Activated CD8-positive, alpha-beta memory T cell treated with anti-CD3 and anti-CD28 coated beads, Interleukin-2, amount 10 ng/mL, durations not matched to agents 7 days and 5 days (primary cell): ENCODE measurements at regions of chr1 and their contacts with region 1.

Region 1: DNA sequence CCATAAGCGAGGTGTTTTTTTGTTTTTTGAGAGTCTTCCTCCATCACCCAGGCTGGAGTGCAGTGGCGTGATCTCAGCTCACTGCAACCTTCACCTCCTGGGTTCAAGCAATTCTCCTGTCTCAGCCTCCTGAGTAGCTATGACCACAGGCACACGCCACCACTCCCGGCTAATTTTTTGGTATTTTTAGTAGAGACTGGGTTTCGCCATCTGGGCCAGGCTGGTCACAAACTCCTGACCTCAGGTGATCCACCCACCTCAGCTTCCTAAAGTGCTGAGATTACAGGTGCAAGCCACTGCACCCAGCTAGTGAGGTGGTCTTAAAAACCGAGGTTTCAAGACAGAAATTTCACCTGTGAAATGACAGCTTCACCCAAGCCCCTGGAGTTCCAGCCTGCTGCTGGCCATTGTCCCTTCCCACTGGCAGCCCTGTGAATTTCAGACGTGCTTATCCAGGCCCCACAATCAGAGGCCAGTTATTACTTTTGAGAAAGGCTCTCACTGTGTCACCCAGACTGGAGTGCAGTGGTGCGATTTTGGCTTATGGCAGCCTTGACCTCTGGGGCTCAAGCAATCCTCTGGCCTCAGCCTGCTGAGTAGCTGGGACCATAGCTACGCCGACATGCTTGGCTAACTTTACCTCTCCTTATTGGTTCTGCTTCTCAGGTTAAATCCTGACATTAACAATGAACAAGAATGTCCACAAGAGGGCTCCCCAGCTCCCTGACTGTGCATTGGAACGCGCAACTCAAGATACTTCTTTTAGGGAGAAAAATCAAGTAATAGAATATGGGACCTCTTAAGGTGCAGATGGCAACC is 19.4 kb downstream of the ENO1 start:
- DNase-seq: peak; percentile 68
- ATAC-seq: peak; percentile 48
- H3K4me3 Mint-ChIP-seq: peak overlapping the region; percentile 32
- H3K27ac Mint-ChIP-seq: peak overlapping the region; percentile 90
- H3K4me1 Mint-ChIP-seq: peaks cover 60% of the 10 kb centered on the region
- H3K27me3 Mint-ChIP-seq: no peaks in the 10 kb centered on the region

Region 2: GRCh38 chr1:8525558-8526275 is 333.4 kb before region 1 on chr1:
- CTCF ChIA-PET with region 1: no interaction called
- DNase-seq: peak; percentile 57
- ATAC-seq: peak; percentile 81
- H3K4me3 Mint-ChIP-seq: no peak overlapping the region
- H3K27ac Mint-ChIP-seq: no peak overlapping the region
- H3K4me1 Mint-ChIP-seq: peaks cover 24% of the 10 kb centered on the region
- H3K27me3 Mint-ChIP-seq: no peaks in the 10 kb centered on the region

Region 3: GRCh38 chr1:8873506-8874229 is 14.6 kb after region 1 on chr1:
- CTCF ChIA-PET with region 1: interaction called, 54 read pairs
- DNase-seq: peak; percentile 86
- ATAC-seq: peak; percentile 46
- H3K4me3 Mint-ChIP-seq: peak overlapping the region; percentile 97
- H3K27ac Mint-ChIP-seq: peak overlapping the region; percentile 80
- H3K4me1 Mint-ChIP-seq: peaks cover 71% of the 10 kb centered on the region
- H3K27me3 Mint-ChIP-seq: no peaks in the 10 kb centered on the region

Region 4: GRCh38 chr1:8941906-8942305 is 82.8 kb after region 1 on chr1:
- CTCF ChIA-PET with region 1: no interaction called
- DNase-seq: no peak
- ATAC-seq: no peak
- H3K4me3 Mint-ChIP-seq: peak overlapping the region; percentile 33
- H3K27ac Mint-ChIP-seq: peak overlapping the region; percentile 74
- H3K4me1 Mint-ChIP-seq: peaks cover 88% of the 10 kb centered on the region
- H3K27me3 Mint-ChIP-seq: no peaks in the 10 kb centered on the region